ENCODE measurements at regions of chr1 and their contacts with region 1.

Region 1: DNA sequence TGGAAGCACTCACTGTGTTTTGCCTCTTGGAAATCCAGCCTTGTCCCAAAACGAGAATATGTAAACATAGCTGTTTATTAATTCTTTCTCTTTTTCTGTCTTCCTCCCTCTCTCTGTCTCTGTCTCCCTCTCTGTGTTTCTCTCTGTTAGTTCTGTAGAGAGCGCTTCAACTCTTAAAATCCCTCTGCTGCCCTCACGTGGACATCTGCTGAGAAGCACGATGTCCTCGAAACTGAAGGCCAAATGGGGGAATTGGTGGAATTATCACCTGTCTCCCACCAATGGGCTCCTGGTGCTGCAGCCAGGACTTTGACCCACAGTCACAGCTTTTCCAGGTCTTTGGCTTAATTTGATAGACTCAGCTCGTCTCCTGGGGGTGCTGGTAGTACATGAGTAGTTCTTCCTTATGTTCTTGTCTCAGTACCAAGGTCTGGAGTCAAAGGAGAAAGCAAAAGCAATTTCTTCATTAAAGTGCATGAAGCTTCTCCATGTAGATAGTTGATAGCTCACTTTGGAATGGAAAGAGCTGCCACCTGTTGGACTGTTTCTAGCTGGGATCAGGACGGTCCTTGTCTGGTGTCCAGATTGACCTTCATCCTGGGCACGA is 5.5 kb upstream of the GBP6 start:
- DNase-seq: peak; percentile 60 to 88 (median 77)
- H3K4me3 ChIP-seq: no peak overlapping the region
- H3K27ac ChIP-seq: no peak overlapping the region
- H3K4me1 ChIP-seq: no peaks in the 10 kb centered on the region
- H3K27me3 ChIP-seq: no peaks in the 10 kb centered on the region
- CTCF ChIP-seq: peak; percentile 88

Region 2: DNA sequence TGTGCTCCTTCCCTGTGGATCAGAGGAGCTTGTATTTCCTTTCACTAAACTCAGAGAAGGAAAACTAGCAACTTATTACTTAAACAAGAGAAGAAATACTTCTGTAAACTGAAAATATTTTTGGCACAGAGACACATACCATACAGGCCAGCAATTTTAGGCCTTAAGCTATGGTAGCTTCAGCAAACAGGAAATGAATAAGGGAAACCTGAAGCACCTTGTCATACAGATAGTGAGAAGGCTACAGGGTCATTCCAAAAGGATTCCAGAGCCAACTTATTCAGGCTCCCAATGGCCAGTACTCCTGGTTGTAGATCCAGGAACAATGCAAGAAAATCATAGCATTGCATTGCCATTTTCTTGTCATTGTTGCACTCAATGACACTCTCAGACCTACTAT is 356.9 kb before region 1 on chr1:
- intact Hi-C with region 1: loop called (anchors 10 kb)
- DNase-seq: no peak
- H3K4me3 ChIP-seq: no peak overlapping the region
- H3K27ac ChIP-seq: no peak overlapping the region
- H3K4me1 ChIP-seq: no peaks in the 10 kb centered on the region
- H3K27me3 ChIP-seq: no peaks in the 10 kb centered on the region
- CTCF ChIP-seq: no peak

Region 3: DNA sequence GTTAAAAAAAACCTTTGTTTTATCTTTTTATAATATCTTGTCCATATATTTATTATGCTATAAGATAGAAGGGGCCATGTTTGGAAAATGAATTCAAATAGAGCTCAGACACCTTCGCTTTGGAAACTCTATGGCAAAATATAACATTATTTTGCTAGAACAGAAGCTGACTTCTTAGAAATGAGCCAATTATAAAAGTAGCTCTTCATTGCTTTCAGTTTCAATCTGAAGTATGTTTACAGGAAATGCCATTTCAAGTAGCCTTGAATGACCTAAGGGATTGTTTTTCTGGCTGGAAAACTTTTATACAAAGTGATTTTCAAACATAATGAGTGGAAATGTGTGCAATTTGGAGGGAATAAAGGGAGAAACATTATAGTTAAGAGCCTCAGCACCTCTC is 47.9 kb before region 1 on chr1:
- intact Hi-C with region 1: no loop called
- DNase-seq: peak in 2 of 5 donors; percentile 5 to 35
- H3K4me3 ChIP-seq: peak overlapping the region in 1 of 3 donors; percentile 24
- H3K27ac ChIP-seq: peak overlapping the region; percentile 14 to 75
- H3K4me1 ChIP-seq: peaks cover 0 to 20% (median 11%) of the 10 kb centered on the region in 3 donors
- H3K27me3 ChIP-seq: no peaks in the 10 kb centered on the region
- CTCF ChIP-seq: no peak